ENCODE measurements at regions of chrX and their contacts with region 1.

Region 1: GRCh38 chrX:13478740-13479451 is 90.5 kb upstream of the EGFL6 start:
- DNase-seq: no peak
- ATAC-seq: no peak
- H3K4me3 ChIP-seq: no peak overlapping the region
- H3K27ac ChIP-seq: peak overlapping the region in 1 of 2 donors; percentile 57
- H3K4me1 ChIP-seq: no peaks in the 10 kb centered on the region
- H3K27me3 ChIP-seq: no peaks in the 10 kb centered on the region

Region 2: GRCh38 chrX:12984629-12985319 is 494.1 kb before region 1 on chrX:
- intact Hi-C with region 1: no loop called
- DNase-seq: no peak
- ATAC-seq: no peak
- H3K4me3 ChIP-seq: no peak overlapping the region
- H3K27ac ChIP-seq: no peak overlapping the region
- H3K4me1 ChIP-seq: no peaks in the 10 kb centered on the region
- H3K27me3 ChIP-seq: no peaks in the 10 kb centered on the region

Region 3: GRCh38 chrX:13432414-13433297 is 46.2 kb before region 1 on chrX:
- intact Hi-C with region 1: loop called in 1 of 2 experiments (anchors 5 kb)
- DNase-seq: peak in 1 of 2 donors; percentile 51
- ATAC-seq: peak; percentile 83
- H3K4me3 ChIP-seq: no peak overlapping the region
- H3K27ac ChIP-seq: peak overlapping the region in 1 of 2 donors; percentile 18
- H3K4me1 ChIP-seq: no peaks in the 10 kb centered on the region
- H3K27me3 ChIP-seq: no peaks in the 10 kb centered on the region

Region 4: GRCh38 chrX:13533726-13534125 is 54.8 kb after region 1 on chrX:
- intact Hi-C with region 1: no loop called
- DNase-seq: no peak
- ATAC-seq: no peak
- H3K4me3 ChIP-seq: no peak overlapping the region
- H3K27ac ChIP-seq: no peak overlapping the region
- H3K4me1 ChIP-seq: no peaks in the 10 kb centered on the region
- H3K27me3 ChIP-seq: no peaks in the 10 kb centered on the region

Measured in aorta (tissue), 5 donors.